Breast epithelium (tissue), 4 donors: ENCODE measurements at regions of chr1 and their contacts with region 1.

Region 1: GRCh38 chr1:179034720-179035119 is 9.0 kb downstream of the FAM20B start:
- DNase-seq: no peak
- H3K4me3 ChIP-seq: no peak overlapping the region
- H3K27ac ChIP-seq: no peak overlapping the region
- H3K4me1 ChIP-seq: no peaks in the 10 kb centered on the region
- H3K27me3 ChIP-seq: no peaks in the 10 kb centered on the region
- CTCF ChIP-seq: no peak
- POLR2A ChIP-seq: no peak

Region 2: GRCh38 chr1:177451191-177451590 is 1583.5 kb before region 1 on chr1:
- intact Hi-C with region 1: loop called (anchors 10 kb)
- DNase-seq: no peak
- H3K4me3 ChIP-seq: no peak overlapping the region
- H3K27ac ChIP-seq: no peak overlapping the region
- H3K4me1 ChIP-seq: no peaks in the 10 kb centered on the region
- H3K27me3 ChIP-seq: no peaks in the 10 kb centered on the region
- CTCF ChIP-seq: no peak
- POLR2A ChIP-seq: no peak